ENCODE measurements at regions of chr15 and their contacts with region 1.

Region 1: GRCh38 chr15:75307778-75308391 is 25.2 kb downstream of the GOLGA6D start:
- DNase-seq: no peak
- ATAC-seq: peak in 2 of 4 donors; percentile 30 to 42
- H3K4me3 ChIP-seq: no peak overlapping the region
- H3K27ac ChIP-seq: no peak overlapping the region
- H3K4me1 ChIP-seq: no peaks in the 10 kb centered on the region
- H3K27me3 ChIP-seq: peaks cover 4 to 38% (median 6%) of the 10 kb centered on the region in 3 donors
- CTCF ChIP-seq: peak; percentile 12

Region 2: DNA sequence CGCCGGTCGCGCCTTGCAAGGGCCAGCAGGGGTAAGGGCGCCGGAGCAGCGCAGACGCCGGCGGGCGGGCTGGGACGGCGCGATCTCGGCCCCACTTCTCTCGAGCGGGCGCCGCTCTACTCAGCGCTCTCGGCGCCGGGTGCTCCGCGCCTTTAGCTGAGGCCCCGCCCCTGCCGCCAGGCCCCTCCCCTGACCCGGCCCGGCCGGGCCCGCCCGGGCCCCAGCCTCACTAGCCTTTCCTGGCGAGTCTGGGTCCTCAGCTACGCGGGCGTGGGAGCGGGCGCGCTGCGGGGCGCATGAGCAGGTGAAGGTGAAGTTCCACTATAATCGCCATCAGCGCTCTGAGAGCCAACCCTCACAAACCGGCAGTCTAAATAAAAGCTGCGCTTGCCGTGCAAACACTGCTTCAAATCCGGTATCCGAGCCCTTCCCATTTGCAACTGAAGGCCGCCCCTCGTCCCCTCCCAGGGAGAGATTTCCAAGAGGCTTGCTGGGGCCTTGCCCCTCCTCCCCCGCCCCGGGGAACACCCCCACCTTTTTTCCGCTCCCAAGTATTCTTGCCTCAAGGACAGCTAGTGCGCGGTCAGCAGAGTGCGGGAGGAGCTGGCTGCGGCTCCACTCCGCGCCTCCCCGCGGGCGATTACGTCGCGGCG is 351.1 kb before region 1 on chr15 and contains the start of gene RPP25:
- intact Hi-C with region 1: no loop called
- DNase-seq: peak; percentile 78 to 84
- ATAC-seq: peak; percentile 83 to 90 (median 89)
- H3K4me3 ChIP-seq: peak within 1 kb of the TSS; percentile 72
- H3K27ac ChIP-seq: peak within 1 kb of the TSS; percentile 60
- H3K4me1 ChIP-seq: peaks cover 29% of the 10 kb centered on the region
- H3K27me3 ChIP-seq: peaks cover 0 to 50% (median 15%) of the 10 kb centered on the region in 3 donors
- CTCF ChIP-seq: no peak
- total RNA-seq, gene RPP25: 0.64 to 1.9 (median 1.4) TPM

Region 3: DNA sequence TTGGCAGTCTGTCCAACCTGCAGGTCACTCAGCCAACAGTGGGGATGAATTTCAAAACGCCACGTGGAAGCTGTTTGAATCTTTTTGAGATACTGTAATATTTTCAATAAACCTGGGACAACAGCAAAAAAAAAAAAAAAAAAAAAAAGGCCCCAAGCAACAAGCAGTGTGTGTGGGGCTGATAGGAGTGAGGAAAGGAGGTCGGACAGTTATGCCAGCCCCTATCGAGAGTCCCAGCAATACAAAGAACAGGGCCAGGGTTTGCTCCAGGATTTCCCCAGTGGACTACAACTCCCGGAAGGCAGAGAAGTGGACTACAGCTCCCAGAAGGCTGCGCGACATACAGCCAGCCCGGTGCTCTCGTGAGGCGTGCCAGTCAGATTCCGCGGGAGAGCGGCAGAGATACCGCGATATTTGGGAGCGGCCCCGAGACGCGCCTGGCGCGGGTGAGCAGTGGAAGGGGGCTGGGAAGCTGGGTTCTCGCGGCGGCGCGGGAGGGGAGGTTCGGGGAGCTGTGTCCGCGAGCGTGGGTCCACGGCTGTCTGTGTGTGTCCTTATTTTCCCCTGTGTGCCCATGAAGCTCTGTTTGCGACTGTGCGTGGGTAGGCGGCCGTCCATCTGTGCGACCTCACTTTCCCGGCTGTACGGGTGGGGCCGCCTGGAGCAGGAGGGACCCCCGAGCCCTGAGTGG is 284.6 kb before region 1 on chr15 and contains the start of gene PPCDC:
- intact Hi-C with region 1: loop called in 1 of 2 experiments (anchors 10 kb)
- DNase-seq: peak; percentile 97 to 98
- ATAC-seq: peak; percentile 99 to 100 (median 100)
- H3K4me3 ChIP-seq: peak within 1 kb of the TSS; percentile 77
- H3K27ac ChIP-seq: peak within 1 kb of the TSS; percentile 86
- H3K4me1 ChIP-seq: peaks cover 13% of the 10 kb centered on the region
- H3K27me3 ChIP-seq: peaks cover 0 to 2% (median 0%) of the 10 kb centered on the region in 3 donors
- CTCF ChIP-seq: no peak
- total RNA-seq, gene PPCDC: 2.4 to 11.7 (median 4.9) TPM